ENCODE measurements at regions of chr17 and their contacts with region 1.

Region 1: DNA sequence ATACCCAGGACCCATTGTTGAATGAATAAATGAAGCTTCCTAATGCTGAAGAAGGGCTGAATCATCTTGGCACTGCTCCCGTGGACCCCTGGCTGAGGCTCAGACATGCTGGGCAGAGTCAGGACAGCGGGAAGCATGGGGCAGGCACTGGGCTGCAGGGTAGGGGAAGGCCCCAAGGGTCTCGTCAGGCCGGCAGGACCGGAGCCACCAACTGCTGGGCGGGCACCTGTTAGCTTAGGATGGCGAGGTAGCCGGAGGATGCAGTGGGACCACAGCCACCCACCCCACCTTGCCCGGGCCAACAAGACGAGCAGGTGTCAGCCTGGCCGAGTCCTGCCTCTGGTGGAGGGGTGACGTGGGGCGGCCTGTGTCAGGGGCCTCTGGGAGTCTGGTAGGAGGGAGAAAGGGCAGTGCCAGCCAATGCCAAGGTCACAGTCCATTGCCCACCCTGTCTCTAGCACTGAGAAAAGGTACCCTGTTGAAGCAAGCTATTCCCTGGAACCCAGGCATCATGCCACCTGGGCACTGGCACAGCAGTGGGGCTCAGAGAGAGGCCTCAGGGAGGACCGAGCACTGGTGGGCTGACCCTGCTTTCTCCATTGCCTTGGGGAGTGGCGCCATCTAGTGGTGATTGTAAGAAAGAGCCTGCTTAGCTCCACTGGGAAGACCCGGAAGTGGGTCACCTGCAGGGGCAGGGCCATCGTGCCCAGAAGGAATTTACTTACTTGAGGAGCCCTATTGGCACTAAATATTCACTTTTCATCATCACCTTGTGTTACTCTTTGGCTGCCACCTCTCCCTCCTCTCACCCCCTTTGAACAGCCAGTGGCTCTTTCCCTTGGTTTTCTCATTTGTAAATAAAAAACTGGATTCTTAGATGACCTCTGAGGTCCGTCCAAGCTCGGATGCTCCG is 3.0 kb upstream of the DLX3 start:
- H3K4me3 ChIP-seq: no peak overlapping the region
- H3K27ac ChIP-seq: no peak overlapping the region
- H3K4me1 ChIP-seq: peaks cover 4% of the 10 kb centered on the region
- CTCF ChIP-seq: peak; percentile 95

Region 2: DNA sequence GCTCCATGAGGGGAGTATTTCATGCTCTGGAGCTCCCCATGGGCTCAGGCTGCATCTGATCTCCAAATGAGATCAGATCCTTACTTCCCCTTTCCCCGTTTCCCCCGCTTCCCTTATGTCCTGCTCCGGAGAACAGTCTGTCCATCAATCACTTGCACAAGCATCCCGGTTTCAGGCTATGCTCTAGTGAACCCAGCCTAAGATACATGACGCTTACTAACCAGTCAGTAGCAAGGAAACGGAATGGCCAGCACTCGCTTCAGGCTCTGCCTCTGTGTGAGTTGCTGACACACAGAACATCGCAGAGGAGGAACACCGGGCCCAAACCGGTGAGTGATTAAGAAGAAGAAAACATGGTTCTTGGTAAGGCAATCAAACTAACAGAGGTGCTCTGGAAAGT is 1114.9 kb before region 1 on chr17:
- CTCF ChIA-PET with region 1: no interaction called
- POLR2A ChIA-PET with region 1: no interaction called
- H3K4me3 ChIP-seq: no peak overlapping the region
- H3K27ac ChIP-seq: no peak overlapping the region
- H3K4me1 ChIP-seq: no peaks in the 10 kb centered on the region
- CTCF ChIP-seq: no peak

Region 3: GRCh38 chr17:49694847-49695683 is 303.0 kb before region 1 on chr17:
- CTCF ChIA-PET with region 1: interaction called, 28 read pairs
- POLR2A ChIA-PET with region 1: no interaction called
- H3K4me3 ChIP-seq: no peak overlapping the region
- H3K27ac ChIP-seq: no peak overlapping the region
- H3K4me1 ChIP-seq: no peaks in the 10 kb centered on the region
- CTCF ChIP-seq: peak; percentile 48

Region 4: DNA sequence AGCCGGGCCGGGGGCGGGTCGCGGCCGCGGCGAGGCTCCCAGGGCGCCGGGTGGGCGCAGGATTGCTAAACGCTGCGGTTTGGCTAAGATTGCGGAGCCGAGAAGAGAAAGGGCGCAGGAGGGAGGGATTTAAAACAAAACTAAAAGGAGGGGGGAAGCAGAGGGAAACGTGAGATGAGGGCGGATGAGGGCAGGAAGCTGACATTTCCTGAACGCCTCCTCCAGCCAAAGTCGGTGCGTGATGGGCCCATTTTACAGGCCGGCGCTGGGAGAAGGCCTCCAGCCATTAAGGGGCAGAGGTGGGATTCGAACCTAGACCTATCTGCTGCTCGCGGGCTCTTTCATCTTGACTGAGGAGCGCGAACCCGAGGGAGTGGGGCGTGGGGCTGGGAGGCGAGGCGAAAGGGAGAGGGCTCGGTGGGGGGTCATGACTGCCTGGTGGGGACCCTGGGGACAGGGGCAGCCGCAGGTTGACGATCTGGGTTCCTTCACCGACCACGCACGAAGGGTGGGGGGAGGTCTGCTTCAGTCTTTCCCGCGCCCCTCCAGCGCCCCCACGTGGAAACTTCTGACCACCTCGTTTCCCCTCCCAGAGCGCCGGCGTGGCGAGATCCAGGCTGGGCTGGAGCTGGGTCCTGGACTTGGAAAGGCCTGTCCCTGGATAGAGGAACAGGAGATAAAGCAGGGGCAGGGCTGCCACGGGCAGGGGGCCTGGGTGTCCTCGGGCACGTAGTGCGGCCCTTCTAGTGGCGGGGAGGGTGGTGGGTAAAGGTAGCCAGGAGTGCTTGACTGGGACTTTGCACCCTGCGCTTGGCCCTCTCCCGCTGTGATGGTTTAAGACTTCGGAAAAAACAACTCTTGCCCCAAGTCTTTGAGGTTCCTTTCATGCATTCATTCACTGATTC is 146.4 kb before region 1 on chr17:
- CTCF ChIA-PET with region 1: interaction called, 526 read pairs
- POLR2A ChIA-PET with region 1: no interaction called
- H3K4me3 ChIP-seq: peak overlapping the region; percentile 27
- H3K27ac ChIP-seq: peak overlapping the region; percentile 12; the same call in 1 of the 2 replicates
- H3K4me1 ChIP-seq: peaks cover 5% of the 10 kb centered on the region; the same call in 1 of the 2 replicates
- CTCF ChIP-seq: peak; percentile 85

Region 5: DNA sequence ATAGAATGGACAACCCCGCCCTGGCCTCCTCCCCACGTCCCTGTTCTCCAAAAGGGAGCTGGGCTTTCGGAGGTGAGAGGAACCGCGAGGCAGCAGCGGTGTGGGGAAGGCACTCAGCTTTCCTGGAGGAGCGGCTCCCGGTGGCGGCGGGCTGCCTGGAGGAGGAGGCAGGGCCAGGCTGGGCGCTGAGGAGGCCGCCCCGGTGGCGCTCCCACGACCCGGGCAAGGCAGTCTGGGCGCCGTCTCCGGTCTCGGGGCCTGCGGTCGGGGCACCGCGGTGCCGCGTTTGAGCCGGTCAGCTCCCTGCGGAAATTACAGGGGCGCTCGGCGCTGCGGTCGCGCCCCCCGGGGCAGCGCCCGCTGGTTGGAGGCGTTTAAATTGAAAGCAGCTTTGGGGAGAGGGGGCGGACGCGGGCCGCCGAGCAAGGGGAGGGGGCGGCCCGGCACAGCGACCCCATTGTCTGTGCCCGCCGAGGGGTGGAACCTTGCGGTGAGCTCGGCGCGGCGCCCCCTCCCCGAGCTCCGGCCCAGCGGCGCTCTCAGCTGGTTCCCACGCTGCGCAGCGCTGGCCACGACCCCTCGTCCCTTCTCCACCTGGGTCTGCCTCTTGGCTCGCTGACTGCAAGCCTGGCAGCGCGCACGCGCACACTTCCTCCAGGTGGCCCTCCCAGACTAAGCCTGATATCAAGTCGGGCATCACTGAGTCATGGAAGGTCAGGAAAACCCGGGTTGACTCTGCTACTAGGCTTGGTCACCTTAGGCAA is 87.8 kb before region 1 on chr17:
- CTCF ChIA-PET with region 1: interaction called, 58 read pairs
- POLR2A ChIA-PET with region 1: interaction called, 7 read pairs
- H3K4me3 ChIP-seq: no peak overlapping the region
- H3K27ac ChIP-seq: no peak overlapping the region
- H3K4me1 ChIP-seq: no peaks in the 10 kb centered on the region
- CTCF ChIP-seq: no peak

Region 6: GRCh38 chr17:49944273-49944890 is 53.7 kb before region 1 on chr17:
- CTCF ChIA-PET with region 1: interaction called, 23 read pairs
- POLR2A ChIA-PET with region 1: no interaction called
- H3K4me3 ChIP-seq: no peak overlapping the region
- H3K27ac ChIP-seq: no peak overlapping the region
- H3K4me1 ChIP-seq: no peaks in the 10 kb centered on the region
- CTCF ChIP-seq: no peak

Region 7: DNA sequence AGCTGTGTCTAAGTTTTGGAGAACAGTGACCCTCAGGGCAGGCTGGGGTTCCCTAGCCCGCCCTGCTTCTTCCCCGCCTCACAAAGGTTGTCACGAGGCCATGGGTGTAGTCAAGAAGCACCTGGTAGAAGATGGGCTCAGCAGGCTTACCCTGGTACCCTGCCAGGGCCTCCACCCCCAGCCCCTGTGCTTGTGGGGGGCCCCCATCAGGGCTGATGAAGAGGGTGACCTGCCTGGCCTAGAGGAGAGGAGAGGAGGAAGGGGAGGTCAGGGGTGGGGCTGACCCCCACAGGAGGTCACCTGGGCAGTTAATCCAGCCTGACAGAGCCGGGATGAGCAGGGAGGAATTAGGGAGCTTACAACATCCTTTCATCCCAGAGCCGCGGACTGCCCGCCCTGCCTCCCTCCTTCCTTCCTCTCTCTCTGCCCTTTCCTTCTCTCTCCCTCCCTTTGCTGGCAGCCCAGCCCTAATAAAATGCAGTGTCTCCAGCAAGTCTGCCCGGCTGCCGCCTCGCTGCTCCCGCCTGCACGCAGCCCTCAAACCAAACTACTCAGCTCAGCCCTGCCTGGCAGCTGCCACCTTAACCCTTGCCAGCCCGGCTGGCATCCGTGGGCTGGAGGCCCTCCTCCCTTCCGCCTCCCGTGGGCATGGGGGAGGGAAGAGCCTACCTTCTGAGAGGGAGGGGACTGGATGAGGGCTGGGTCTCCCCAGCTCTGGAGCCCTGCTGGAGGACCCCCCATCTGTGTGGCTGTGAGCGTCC is 10.2 kb before region 1 on chr17:
- CTCF ChIA-PET with region 1: interaction called, 112 read pairs
- POLR2A ChIA-PET with region 1: interaction called, 14 read pairs
- H3K4me3 ChIP-seq: no peak overlapping the region
- H3K27ac ChIP-seq: no peak overlapping the region
- H3K4me1 ChIP-seq: no peaks in the 10 kb centered on the region; the same call in 1 of the 2 replicates
- CTCF ChIP-seq: no peak

Region 8: DNA sequence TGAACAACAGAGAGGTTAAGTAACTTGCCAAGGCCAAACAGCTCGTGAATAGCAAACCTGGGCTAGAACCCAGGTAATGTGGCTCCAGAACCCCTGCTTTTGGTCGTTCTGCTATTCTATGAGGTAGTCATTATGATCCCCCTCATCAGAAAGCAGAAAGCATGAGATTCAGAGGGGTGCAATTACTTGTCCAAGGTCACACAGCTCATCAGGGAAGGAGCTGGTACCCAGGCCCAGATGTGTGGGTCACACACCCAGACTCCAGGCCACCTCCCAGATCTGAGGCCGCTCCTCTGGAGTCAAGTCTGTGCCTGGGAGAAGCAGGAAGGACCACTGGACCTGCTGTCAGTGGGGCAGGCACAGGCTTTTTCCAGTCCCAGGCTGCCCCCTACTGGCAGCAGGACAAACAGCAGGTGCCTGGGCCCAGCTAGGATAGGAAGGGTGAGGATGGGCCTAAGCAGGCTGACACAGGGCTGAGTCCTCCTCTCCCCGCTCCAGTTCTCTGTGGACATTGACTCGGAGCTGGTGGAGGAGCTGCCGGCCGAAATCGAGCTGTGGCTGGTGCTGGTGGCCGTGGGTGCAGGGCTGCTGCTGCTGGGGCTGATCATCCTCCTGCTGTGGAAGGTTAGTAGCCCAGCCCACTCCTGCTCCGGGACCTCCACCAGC is 89.3 kb after region 1 on chr17:
- CTCF ChIA-PET with region 1: interaction called, 62 read pairs
- POLR2A ChIA-PET with region 1: no interaction called
- H3K4me3 ChIP-seq: no peak overlapping the region
- H3K27ac ChIP-seq: no peak overlapping the region
- H3K4me1 ChIP-seq: no peaks in the 10 kb centered on the region
- CTCF ChIP-seq: peak; percentile 91

Region 9: DNA sequence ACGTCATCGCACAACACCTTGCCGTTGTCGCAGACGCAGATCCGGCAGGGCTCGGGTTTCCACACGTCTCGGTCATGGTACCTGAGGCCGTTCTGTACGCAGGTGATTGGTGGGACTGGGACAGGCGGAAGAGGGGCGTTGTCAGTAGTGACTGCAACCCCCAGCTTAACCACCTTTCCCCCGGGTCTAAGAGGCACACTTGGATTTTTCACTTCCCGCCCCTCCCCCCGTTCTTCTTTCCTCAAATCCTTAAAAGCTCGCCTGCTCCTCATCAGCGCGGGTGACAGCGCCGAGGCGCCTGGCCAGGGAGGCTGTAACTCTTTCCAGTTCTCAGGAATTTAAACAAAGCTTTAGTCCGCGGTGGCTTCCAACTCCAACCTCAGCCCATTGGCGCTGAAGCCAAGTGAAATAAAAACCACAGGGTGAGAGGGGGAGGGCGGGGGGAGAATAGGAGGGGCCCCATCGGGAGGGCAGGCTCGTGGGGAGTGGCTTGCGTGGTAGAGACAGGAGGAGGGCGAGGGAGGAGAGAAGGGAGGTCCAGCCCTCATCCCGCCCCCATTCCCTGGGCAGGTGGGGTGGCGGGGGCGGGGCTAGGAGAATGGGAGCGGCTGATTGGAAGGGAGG is 201.9 kb after region 1 on chr17:
- CTCF ChIA-PET with region 1: no interaction called
- POLR2A ChIA-PET with region 1: no interaction called
- H3K4me3 ChIP-seq: peak overlapping the region; percentile 41
- H3K27ac ChIP-seq: peak overlapping the region; percentile 57
- H3K4me1 ChIP-seq: no peaks in the 10 kb centered on the region
- CTCF ChIP-seq: no peak

Measured in HEK293 (cell line).